Esophagus muscularis mucosa (tissue), 4 donors: ENCODE measurements at regions of chr18 and their contacts with region 1.

Region 1: GRCh38 chr18:45402485-45403056 is 212.7 kb upstream of the SLC14A2 start:
- DNase-seq: no peak
- H3K4me3 ChIP-seq: no peak overlapping the region
- H3K27ac ChIP-seq: no peak overlapping the region
- H3K4me1 ChIP-seq: no peaks in the 10 kb centered on the region
- H3K27me3 ChIP-seq: no peaks in the 10 kb centered on the region
- CTCF ChIP-seq: no peak
- EP300 ChIP-seq: no peak
- POLR2A ChIP-seq: no peak

Region 2: GRCh38 chr18:45066886-45067285 is 335.7 kb before region 1 on chr18:
- intact Hi-C with region 1: no loop called
- DNase-seq: no peak
- H3K4me3 ChIP-seq: no peak overlapping the region
- H3K27ac ChIP-seq: no peak overlapping the region
- H3K4me1 ChIP-seq: peaks cover 4 to 30% (median 11%) of the 10 kb centered on the region in 4 donors
- H3K27me3 ChIP-seq: no peaks in the 10 kb centered on the region
- CTCF ChIP-seq: no peak
- EP300 ChIP-seq: no peak
- POLR2A ChIP-seq: no peak

Region 3: GRCh38 chr18:45467293-45467692 is 64.7 kb after region 1 on chr18:
- intact Hi-C with region 1: loop called (anchors 10 kb)
- DNase-seq: peak; percentile 62
- H3K4me3 ChIP-seq: no peak overlapping the region
- H3K27ac ChIP-seq: no peak overlapping the region
- H3K4me1 ChIP-seq: peaks cover 0 to 8% (median 3%) of the 10 kb centered on the region in 4 donors
- H3K27me3 ChIP-seq: no peaks in the 10 kb centered on the region
- CTCF ChIP-seq: no peak
- EP300 ChIP-seq: no peak
- POLR2A ChIP-seq: no peak

Region 4: GRCh38 chr18:45540125-45540524 is 137.6 kb after region 1 on chr18:
- intact Hi-C with region 1: loop called (anchors 10 kb)
- DNase-seq: no peak
- H3K4me3 ChIP-seq: no peak overlapping the region
- H3K27ac ChIP-seq: no peak overlapping the region
- H3K4me1 ChIP-seq: no peaks in the 10 kb centered on the region
- H3K27me3 ChIP-seq: no peaks in the 10 kb centered on the region
- CTCF ChIP-seq: no peak
- EP300 ChIP-seq: no peak
- POLR2A ChIP-seq: no peak